ENCODE measurements at regions of chr3 and their contacts with region 1.

Region 1: GRCh38 chr3:74375653-74376052 is 238.8 kb downstream of the CNTN3 start:
- DNase-seq: no peak
- H3K4me3 ChIP-seq: no peak overlapping the region
- H3K27ac ChIP-seq: no peak overlapping the region
- H3K4me1 ChIP-seq: no peaks in the 10 kb centered on the region
- H3K27me3 ChIP-seq: no peaks in the 10 kb centered on the region
- CTCF ChIP-seq: no peak

Region 2: DNA sequence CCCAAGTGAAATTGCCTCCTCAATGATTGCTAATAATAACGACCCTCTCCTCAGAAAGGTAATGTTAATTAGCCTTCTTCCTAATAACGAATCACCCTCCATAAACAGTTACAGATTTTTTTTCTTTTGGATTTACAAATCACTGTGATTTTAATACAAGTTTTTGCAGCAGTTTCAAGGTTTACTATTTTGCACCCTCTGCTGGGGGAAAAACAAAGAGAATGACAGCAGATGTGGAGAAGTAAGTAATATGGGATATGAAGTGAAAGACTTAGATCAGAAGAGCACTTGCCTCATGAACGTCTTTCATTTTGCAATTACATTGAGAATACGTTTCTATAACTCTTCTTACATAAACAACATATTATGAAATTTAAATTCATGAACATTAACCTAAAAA is 254.9 kb after region 1 on chr3:
- CTCF ChIA-PET with region 1: no interaction called
- dilution Hi-C with region 1: no loop called
- in situ Hi-C with region 1: no loop called
- intact Hi-C with region 1: loop called (anchors 1 kb)
- DNase-seq: peak; percentile 46
- H3K4me3 ChIP-seq: no peak overlapping the region
- H3K27ac ChIP-seq: no peak overlapping the region
- H3K4me1 ChIP-seq: peaks cover 6% of the 10 kb centered on the region
- H3K27me3 ChIP-seq: no peaks in the 10 kb centered on the region
- CTCF ChIP-seq: peak; percentile 27 to 57

Region 3: DNA sequence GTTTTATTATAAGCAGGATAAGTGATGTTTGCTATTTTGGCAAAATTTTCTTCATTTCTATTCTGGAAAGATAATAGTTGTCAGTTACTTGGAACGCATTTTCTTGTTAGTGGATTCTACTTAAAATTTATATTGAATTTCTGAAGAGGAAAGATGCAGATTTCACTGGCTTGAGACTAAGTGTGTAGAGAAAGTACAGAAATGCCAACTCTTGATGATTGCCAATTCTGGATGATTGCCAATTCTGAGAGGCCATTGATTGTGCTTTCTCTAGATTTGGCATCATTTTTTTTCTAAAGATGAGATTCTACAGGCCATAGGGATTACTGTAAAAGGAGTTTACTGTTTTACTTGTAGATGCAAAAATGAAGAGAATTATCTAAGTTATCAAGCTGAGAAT is 297.7 kb after region 1 on chr3:
- CTCF ChIA-PET with region 1: no interaction called
- dilution Hi-C with region 1: no loop called
- in situ Hi-C with region 1: no loop called
- intact Hi-C with region 1: loop called (anchors 1 kb)
- DNase-seq: no peak
- H3K4me3 ChIP-seq: no peak overlapping the region
- H3K27ac ChIP-seq: no peak overlapping the region
- H3K4me1 ChIP-seq: no peaks in the 10 kb centered on the region
- H3K27me3 ChIP-seq: no peaks in the 10 kb centered on the region
- CTCF ChIP-seq: no peak

Region 4: GRCh38 chr3:74766405-74766804 is 390.8 kb after region 1 on chr3:
- CTCF ChIA-PET with region 1: no interaction called
- dilution Hi-C with region 1: no loop called
- in situ Hi-C with region 1: no loop called
- intact Hi-C with region 1: loop called (anchors 10 kb)
- DNase-seq: no peak
- H3K4me3 ChIP-seq: no peak overlapping the region
- H3K27ac ChIP-seq: no peak overlapping the region
- H3K4me1 ChIP-seq: no peaks in the 10 kb centered on the region
- H3K27me3 ChIP-seq: peaks cover 2% of the 10 kb centered on the region
- CTCF ChIP-seq: no peak

Region 5: DNA sequence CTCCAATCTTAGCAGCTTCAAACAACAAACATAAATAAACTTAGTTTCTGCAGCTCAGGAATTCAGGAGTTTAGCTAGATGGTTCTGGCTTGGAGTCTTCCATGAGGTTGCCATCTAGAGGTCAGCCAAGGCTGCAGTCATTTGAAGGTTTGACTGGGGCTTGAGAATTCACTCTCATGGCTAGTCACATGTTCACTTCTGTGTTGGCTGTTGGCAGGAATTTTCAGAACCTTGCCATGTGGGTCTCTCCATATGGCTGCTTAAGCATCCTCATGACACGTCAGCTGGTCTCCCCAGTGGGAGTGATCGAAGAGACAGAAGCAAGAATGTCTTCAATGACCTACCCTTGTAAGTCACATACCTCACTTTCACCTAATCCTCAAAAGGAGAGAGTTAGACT is 508.0 kb after region 1 on chr3:
- CTCF ChIA-PET with region 1: no interaction called
- dilution Hi-C with region 1: no loop called
- in situ Hi-C with region 1: loop called in 1 of 2 experiments (anchors 25 kb)
- intact Hi-C with region 1: loop called (anchors 1 kb)
- DNase-seq: peak; percentile 31
- H3K4me3 ChIP-seq: no peak overlapping the region
- H3K27ac ChIP-seq: no peak overlapping the region
- H3K4me1 ChIP-seq: no peaks in the 10 kb centered on the region
- H3K27me3 ChIP-seq: no peaks in the 10 kb centered on the region
- CTCF ChIP-seq: peak; percentile 64 to 80

Region 6: GRCh38 chr3:75171630-75172230 is 796.1 kb after region 1 on chr3:
- CTCF ChIA-PET with region 1: no interaction called
- dilution Hi-C with region 1: no loop called
- in situ Hi-C with region 1: no loop called
- intact Hi-C with region 1: loop called (anchors 5 kb)
- DNase-seq: no peak
- H3K4me3 ChIP-seq: no peak overlapping the region
- H3K27ac ChIP-seq: no peak overlapping the region
- H3K4me1 ChIP-seq: no peaks in the 10 kb centered on the region
- H3K27me3 ChIP-seq: peaks cover 2% of the 10 kb centered on the region
- CTCF ChIP-seq: peak; percentile 47 to 49